Activated CD8-positive, alpha-beta T cell treated with anti-CD3 and anti-CD28 coated beads for 36 hours (primary cell): ENCODE measurements at regions of chr1 and their contacts with region 1.

Region 1: DNA sequence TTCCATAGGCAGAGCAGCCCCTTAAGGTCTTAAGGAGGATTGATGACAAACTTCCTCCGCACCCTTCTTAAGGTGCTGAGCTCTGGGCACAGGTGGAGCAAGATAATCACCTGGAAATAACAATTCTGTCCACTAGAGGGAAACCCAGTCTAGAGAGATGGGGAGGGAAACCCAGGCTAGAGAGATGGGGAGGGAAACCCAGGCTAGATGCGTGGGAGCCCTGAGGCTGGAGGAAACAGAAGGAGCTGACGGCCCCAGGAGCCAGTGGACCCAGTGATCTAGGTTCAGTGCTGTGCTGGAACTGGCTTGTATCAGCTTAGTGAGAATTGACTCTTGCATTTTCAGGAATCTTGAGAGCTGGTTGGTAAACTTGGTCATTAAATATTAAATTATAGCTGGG is 17.8 kb upstream of the MYCL start:
- DNase-seq: peak; percentile 73
- ATAC-seq: peak; percentile 100
- H3K4me3 Mint-ChIP-seq: no peak overlapping the region
- H3K27ac Mint-ChIP-seq: no peak overlapping the region
- H3K4me1 Mint-ChIP-seq: no peaks in the 10 kb centered on the region
- H3K27me3 Mint-ChIP-seq: no peaks in the 10 kb centered on the region
- CTCF ChIP-seq: peak; percentile 69

Region 2: DNA sequence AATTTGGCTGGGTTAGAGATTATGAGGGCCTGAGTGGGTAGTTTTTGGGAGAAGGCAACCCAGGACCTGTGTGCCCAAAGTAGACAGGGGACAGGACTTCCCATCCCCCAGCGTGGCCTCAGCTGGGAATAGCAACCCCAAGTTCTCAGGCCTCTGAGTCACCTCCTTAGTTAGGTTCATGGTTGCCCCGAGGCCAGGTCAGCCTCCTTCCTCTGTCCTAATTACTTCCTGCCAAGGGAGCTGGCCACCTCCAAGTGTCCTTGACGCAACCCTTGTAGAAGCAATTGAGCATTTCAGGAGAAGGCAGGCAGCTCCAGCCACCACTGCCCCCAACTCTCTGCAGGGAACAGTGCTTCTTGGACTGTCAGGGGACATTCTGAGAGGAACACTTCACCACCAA is 242.6 kb before region 1 on chr1:
- CTCF ChIA-PET with region 1: no interaction called
- POLR2A ChIA-PET with region 1: no interaction called
- intact Hi-C with region 1: no loop called
- DNase-seq: no peak
- ATAC-seq: no peak
- H3K4me3 Mint-ChIP-seq: no peak overlapping the region
- H3K27ac Mint-ChIP-seq: no peak overlapping the region
- H3K4me1 Mint-ChIP-seq: peaks cover 15% of the 10 kb centered on the region
- H3K27me3 Mint-ChIP-seq: peaks cover 9% of the 10 kb centered on the region
- CTCF ChIP-seq: no peak

Region 3: GRCh38 chr1:39901698-39902459 is 17.7 kb before region 1 on chr1 and contains the start of gene MYCL:
- CTCF ChIA-PET with region 1: interaction called, 28 read pairs
- POLR2A ChIA-PET with region 1: interaction called, 5 read pairs
- intact Hi-C with region 1: no loop called
- DNase-seq: peak; percentile 85
- ATAC-seq: peak; percentile 89
- H3K4me3 Mint-ChIP-seq: peak within 1 kb of the TSS; percentile 70
- H3K27ac Mint-ChIP-seq: no peak within 1 kb of the TSS
- H3K4me1 Mint-ChIP-seq: no peaks in the 10 kb centered on the region
- H3K27me3 Mint-ChIP-seq: peaks cover 55% of the 10 kb centered on the region
- CTCF ChIP-seq: peak; percentile 75
- total RNA-seq, gene MYCL: 0.13 to 0.20 TPM

Region 4: GRCh38 chr1:39936724-39937491 is 17.4 kb after region 1 on chr1:
- CTCF ChIA-PET with region 1: interaction called, 12 read pairs
- POLR2A ChIA-PET with region 1: no interaction called
- intact Hi-C with region 1: no loop called
- DNase-seq: no peak
- ATAC-seq: no peak
- H3K4me3 Mint-ChIP-seq: no peak overlapping the region
- H3K27ac Mint-ChIP-seq: no peak overlapping the region
- H3K4me1 Mint-ChIP-seq: no peaks in the 10 kb centered on the region
- H3K27me3 Mint-ChIP-seq: no peaks in the 10 kb centered on the region
- CTCF ChIP-seq: no peak

Region 5: GRCh38 chr1:39954816-39955546 is 35.4 kb after region 1 on chr1 and contains the start of gene MFSD2A:
- CTCF ChIA-PET with region 1: interaction called, 18 read pairs
- POLR2A ChIA-PET with region 1: no interaction called
- intact Hi-C with region 1: no loop called
- DNase-seq: peak; percentile 95
- ATAC-seq: peak; percentile 93
- H3K4me3 Mint-ChIP-seq: peak within 1 kb of the TSS; percentile 92
- H3K27ac Mint-ChIP-seq: peak within 1 kb of the TSS; percentile 89
- H3K4me1 Mint-ChIP-seq: peaks cover 34% of the 10 kb centered on the region
- H3K27me3 Mint-ChIP-seq: no peaks in the 10 kb centered on the region
- CTCF ChIP-seq: no peak
- total RNA-seq, gene MFSD2A: 15.0 to 19.3 TPM

Region 6: GRCh38 chr1:40032240-40032891 is 112.8 kb after region 1 on chr1:
- CTCF ChIA-PET with region 1: interaction called, 30 read pairs
- POLR2A ChIA-PET with region 1: no interaction called
- intact Hi-C with region 1: loop called (anchors 10 kb)
- DNase-seq: peak; percentile 68
- ATAC-seq: peak; percentile 69
- H3K4me3 Mint-ChIP-seq: no peak overlapping the region
- H3K27ac Mint-ChIP-seq: no peak overlapping the region
- H3K4me1 Mint-ChIP-seq: peaks cover 33% of the 10 kb centered on the region
- H3K27me3 Mint-ChIP-seq: no peaks in the 10 kb centered on the region
- CTCF ChIP-seq: peak; percentile 63